B cell (primary cell): ENCODE measurements at regions of chr2 and their contacts with region 1.

Region 1: DNA sequence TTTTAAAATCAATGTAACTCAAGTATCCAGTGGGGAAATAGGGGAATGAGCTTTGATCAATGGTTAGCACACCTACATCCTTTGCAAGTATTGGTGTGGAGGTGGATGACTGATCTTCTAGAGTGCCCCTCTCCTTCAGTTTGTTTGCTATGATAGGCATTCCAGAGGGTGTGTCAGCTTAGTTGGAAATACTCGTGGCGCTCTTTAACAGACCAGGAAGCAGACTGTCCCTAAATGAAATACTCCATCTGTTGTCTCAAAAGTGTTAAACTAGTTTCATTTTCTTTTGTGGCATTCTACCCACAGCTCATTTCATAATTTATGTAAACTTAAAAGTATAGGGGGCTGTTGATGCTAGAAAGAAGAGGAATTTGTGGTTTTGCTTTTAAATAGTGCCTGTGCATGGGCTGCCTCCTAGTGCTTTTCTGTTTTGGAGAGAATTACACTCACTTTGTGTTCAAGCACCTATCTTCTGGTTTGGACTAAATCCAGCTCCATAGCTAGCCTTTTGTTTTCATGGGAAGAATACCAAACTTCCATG is 66.2 kb downstream of the STAT1 start:
- DNase-seq: peak; percentile 58
- ATAC-seq: peak; percentile 61
- H3K4me3 ChIP-seq: no peak overlapping the region
- H3K4me3 Mint-ChIP-seq: peak overlapping the region; percentile 56
- H3K27ac ChIP-seq: peak overlapping the region in 1 of 2 donors; percentile 58
- H3K27ac Mint-ChIP-seq: peak overlapping the region; percentile 83
- H3K4me1 ChIP-seq: peaks cover 14 to 18% of the 10 kb centered on the region in 2 donors
- H3K4me1 Mint-ChIP-seq: peaks cover 16% of the 10 kb centered on the region
- H3K27me3 ChIP-seq: no peaks in the 10 kb centered on the region
- H3K27me3 Mint-ChIP-seq: no peaks in the 10 kb centered on the region
- CTCF ChIP-seq: peak; percentile 38

Region 2: DNA sequence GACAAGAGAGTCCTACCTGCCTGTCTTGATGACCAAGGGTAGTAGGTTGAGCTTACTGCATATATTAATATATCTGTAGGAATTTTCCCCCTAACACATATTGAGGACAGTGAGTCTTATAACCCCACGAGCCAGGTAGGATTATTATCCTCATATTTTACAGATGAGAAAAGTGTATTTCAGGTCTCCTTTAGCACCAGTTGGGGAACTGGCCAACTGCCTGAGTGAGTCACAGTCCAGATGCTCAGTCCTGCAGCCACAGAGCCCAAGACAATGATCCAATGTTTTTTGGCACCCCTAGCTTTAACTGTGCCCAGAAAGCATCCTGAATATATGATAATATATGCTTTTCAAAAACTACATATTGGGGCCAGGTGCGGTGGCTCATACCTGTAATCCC is 98.0 kb before region 1 on chr2:
- CTCF ChIA-PET with region 1: interaction called, 32 read pairs
- POLR2A ChIA-PET with region 1: no interaction called
- intact Hi-C with region 1: loop called (anchors 1 kb)
- DNase-seq: no peak
- ATAC-seq: no peak
- H3K4me3 ChIP-seq: no peak overlapping the region
- H3K4me3 Mint-ChIP-seq: no peak overlapping the region
- H3K27ac ChIP-seq: no peak overlapping the region
- H3K27ac Mint-ChIP-seq: no peak overlapping the region
- H3K4me1 ChIP-seq: peaks cover 7 to 9% of the 10 kb centered on the region in 2 donors
- H3K4me1 Mint-ChIP-seq: peaks cover 12% of the 10 kb centered on the region
- H3K27me3 ChIP-seq: no peaks in the 10 kb centered on the region
- H3K27me3 Mint-ChIP-seq: no peaks in the 10 kb centered on the region
- CTCF ChIP-seq: no peak

Region 3: GRCh38 chr2:191070276-191070675 is 122.5 kb after region 1 on chr2:
- CTCF ChIA-PET with region 1: no interaction called
- POLR2A ChIA-PET with region 1: no interaction called
- intact Hi-C with region 1: no loop called
- DNase-seq: no peak
- ATAC-seq: no peak
- H3K4me3 ChIP-seq: no peak overlapping the region
- H3K4me3 Mint-ChIP-seq: no peak overlapping the region
- H3K27ac ChIP-seq: no peak overlapping the region
- H3K27ac Mint-ChIP-seq: no peak overlapping the region
- H3K4me1 ChIP-seq: no peaks in the 10 kb centered on the region
- H3K4me1 Mint-ChIP-seq: peaks cover 3% of the 10 kb centered on the region
- H3K27me3 ChIP-seq: no peaks in the 10 kb centered on the region
- H3K27me3 Mint-ChIP-seq: peaks cover 6% of the 10 kb centered on the region
- CTCF ChIP-seq: no peak